ENCODE measurements at regions of chr11 and their contacts with region 1.

Region 1: DNA sequence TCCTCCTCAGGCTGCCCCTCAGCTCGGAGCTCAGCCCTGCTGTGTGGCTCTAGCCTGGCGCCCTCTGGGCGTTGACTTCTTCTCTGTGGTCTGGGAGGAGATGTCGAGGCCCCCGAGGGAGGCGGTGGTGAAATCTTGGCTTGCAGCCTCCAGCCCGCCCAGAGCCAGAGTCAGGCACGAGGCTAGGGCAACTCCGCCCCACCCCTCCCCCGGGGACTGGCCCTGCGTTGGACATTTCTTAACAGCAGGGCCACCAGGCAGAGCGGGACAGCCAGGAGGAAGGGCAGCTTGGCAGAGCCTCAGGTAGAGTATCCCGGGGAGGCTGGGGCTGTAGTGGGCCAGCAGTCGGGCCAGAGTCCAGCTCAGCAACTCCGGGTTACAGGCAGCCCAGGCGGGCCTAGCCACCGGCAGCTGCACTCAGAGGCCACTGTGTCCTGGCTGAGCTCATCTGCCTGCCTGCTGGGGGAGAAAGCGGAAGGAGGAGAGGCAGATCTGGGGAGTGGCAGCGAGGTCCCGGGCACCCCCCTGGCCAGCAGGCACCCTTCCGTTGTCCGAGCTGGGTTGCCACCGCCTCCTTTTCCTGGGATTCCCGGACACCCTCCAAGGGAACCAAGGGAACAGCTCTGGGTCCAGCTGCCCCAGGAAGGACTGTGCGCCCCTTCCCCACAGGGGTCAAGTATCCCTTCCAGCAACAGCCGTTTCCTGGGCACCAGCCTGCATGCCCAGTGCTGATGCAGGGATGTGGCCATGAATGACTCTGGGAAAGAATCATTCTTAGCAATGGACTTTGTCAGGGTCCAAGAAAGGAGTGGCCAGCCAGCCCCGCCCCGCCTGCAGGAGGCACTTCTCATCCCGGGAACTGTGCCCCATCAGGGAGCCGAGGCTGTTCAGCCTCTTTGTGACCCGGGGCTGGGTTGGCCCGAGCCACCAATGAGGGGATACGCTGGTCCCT is at the start of gene ALDH3B1:
- DNase-seq: peak; percentile 54
- ATAC-seq: peak; percentile 83
- H3K4me3 Mint-ChIP-seq: peak within 1 kb of the TSS; percentile 78
- H3K27ac Mint-ChIP-seq: peak within 1 kb of the TSS; percentile 79
- H3K4me1 Mint-ChIP-seq: peaks cover 51% of the 10 kb centered on the region
- H3K27me3 Mint-ChIP-seq: no peaks in the 10 kb centered on the region
- CTCF ChIP-seq: no peak
- total RNA-seq, gene ALDH3B1: 0.53 and 0.98 TPM in 2 replicates

Region 2: DNA sequence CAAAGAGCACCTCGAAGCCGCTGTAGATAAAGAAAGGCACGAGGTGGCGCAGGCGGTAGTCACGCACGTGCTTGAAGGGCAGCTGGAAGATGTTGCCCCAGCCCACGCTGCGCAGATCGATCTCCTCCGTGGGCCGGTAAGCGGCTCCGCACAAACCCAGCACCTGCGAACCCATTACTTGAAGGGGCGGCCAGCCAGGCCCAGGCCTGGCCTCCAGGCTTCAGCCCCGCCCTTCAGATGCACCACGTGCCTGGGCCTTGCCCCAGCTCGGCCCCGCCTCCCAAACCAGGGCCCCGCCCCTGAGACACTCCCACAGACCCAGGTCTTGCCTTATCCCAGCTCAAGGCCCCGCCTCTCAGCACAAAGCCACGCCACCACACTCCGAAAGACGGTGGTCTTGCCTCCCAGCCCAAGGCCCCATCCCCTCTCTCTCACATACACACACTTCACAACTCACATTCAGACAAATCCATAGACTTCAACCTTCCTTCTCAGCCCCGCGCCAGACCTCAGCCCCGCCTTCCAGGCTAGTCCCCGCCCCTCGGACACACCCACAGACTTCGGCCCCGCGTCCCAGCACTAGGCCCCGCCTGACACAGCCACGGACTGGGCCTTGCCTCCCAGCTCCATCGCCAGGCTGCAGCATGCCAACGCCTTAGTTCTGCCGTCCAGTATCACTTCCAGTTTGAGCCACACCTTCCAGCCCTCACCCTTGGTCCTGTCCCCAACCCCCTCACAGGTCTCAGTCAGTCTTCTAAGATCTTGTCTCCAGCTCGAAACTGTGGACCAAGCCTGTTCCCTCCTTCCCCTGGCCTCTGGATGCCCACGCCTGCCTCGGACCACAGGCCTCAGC is 13.5 kb before region 1 on chr11:
- CTCF ChIA-PET with region 1: interaction called, 6 read pairs
- POLR2A ChIA-PET with region 1: interaction called, 9 read pairs
- intact Hi-C with region 1: loop called (anchors 2 kb)
- DNase-seq: no peak
- ATAC-seq: peak; percentile 71
- H3K4me3 Mint-ChIP-seq: no peak overlapping the region
- H3K27ac Mint-ChIP-seq: peak overlapping the region; percentile 8
- H3K4me1 Mint-ChIP-seq: peaks cover 70% of the 10 kb centered on the region
- H3K27me3 Mint-ChIP-seq: no peaks in the 10 kb centered on the region
- CTCF ChIP-seq: no peak

Region 3: GRCh38 chr11:68206187-68206601 is 195.8 kb after region 1 on chr11:
- CTCF ChIA-PET with region 1: interaction called, 23 read pairs
- POLR2A ChIA-PET with region 1: interaction called, 3 read pairs
- intact Hi-C with region 1: loop called (anchors 1 kb)
- DNase-seq: no peak
- ATAC-seq: peak; percentile 72
- H3K4me3 Mint-ChIP-seq: no peak overlapping the region
- H3K27ac Mint-ChIP-seq: peak overlapping the region; percentile 31
- H3K4me1 Mint-ChIP-seq: peaks cover 76% of the 10 kb centered on the region
- H3K27me3 Mint-ChIP-seq: no peaks in the 10 kb centered on the region
- CTCF ChIP-seq: peak; percentile 66

Region 4: GRCh38 chr11:68447015-68447801 is 436.8 kb after region 1 on chr11:
- CTCF ChIA-PET with region 1: no interaction called
- POLR2A ChIA-PET with region 1: no interaction called
- intact Hi-C with region 1: loop called (anchors 1 kb)
- DNase-seq: peak; percentile 74
- ATAC-seq: peak; percentile 99
- H3K4me3 Mint-ChIP-seq: no peak overlapping the region
- H3K27ac Mint-ChIP-seq: no peak overlapping the region
- H3K4me1 Mint-ChIP-seq: peaks cover 13% of the 10 kb centered on the region
- H3K27me3 Mint-ChIP-seq: no peaks in the 10 kb centered on the region
- CTCF ChIP-seq: peak; percentile 97

Region 5: DNA sequence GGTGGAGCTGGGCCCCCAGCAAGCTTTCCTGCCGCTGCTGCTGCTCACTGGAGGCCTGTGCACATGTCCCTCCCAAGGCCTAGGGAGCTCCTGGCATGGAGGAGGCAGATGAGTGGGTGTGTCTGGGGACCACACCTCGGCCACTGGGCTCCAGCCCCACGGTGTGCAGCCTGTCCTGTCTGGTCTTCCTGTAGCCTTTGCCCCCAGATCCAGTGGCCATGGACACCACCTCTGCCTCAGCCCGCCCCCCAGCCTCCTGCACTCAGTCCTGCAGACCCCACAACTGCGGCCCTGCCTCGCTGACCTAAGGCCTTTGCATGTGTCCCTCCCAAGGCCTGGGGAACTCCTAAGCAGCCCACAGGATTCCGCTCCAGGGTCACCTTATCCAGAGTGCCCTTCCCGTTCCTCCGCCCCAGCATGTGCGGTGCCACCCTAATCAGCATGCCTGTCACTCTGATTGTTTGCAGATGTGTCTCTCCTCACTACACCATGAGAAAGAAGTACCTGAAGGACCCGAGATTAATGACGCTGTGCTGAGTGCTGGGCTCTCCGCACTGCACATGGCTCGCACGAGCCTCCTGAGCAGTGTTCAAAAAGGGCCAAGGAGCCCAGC is 682.6 kb after region 1 on chr11:
- CTCF ChIA-PET with region 1: no interaction called
- POLR2A ChIA-PET with region 1: no interaction called
- intact Hi-C with region 1: no loop called
- DNase-seq: no peak
- ATAC-seq: no peak
- H3K4me3 Mint-ChIP-seq: no peak overlapping the region
- H3K27ac Mint-ChIP-seq: no peak overlapping the region
- H3K4me1 Mint-ChIP-seq: no peaks in the 10 kb centered on the region
- H3K27me3 Mint-ChIP-seq: peaks cover 40% of the 10 kb centered on the region
- CTCF ChIP-seq: no peak